ENCODE measurements at regions of chr12 and their contacts with region 1.

Region 1: GRCh38 chr12:108526482-108527165 is 11.5 kb downstream of the FICD start:
- DNase-seq: no peak
- ATAC-seq: no peak
- H3K4me3 Mint-ChIP-seq: no peak overlapping the region
- H3K27ac Mint-ChIP-seq: no peak overlapping the region
- H3K4me1 Mint-ChIP-seq: no peaks in the 10 kb centered on the region
- H3K27me3 Mint-ChIP-seq: no peaks in the 10 kb centered on the region
- CTCF ChIP-seq: no peak

Region 2: GRCh38 chr12:108542320-108542719 is 15.7 kb after region 1 on chr12:
- CTCF ChIA-PET with region 1: no interaction called
- POLR2A ChIA-PET with region 1: interaction called, 11 read pairs
- DNase-seq: no peak
- ATAC-seq: no peak
- H3K4me3 Mint-ChIP-seq: no peak overlapping the region
- H3K27ac Mint-ChIP-seq: no peak overlapping the region; the same call in 1 of the 2 replicates
- H3K4me1 Mint-ChIP-seq: no peaks in the 10 kb centered on the region
- H3K27me3 Mint-ChIP-seq: no peaks in the 10 kb centered on the region
- CTCF ChIP-seq: no peak

Region 3: GRCh38 chr12:109069307-109070231 is 542.9 kb after region 1 on chr12:
- CTCF ChIA-PET with region 1: no interaction called
- POLR2A ChIA-PET with region 1: no interaction called
- DNase-seq: peak; percentile 56
- ATAC-seq: peak; percentile 85
- H3K4me3 Mint-ChIP-seq: peak overlapping the region; percentile 52
- H3K27ac Mint-ChIP-seq: peak overlapping the region; percentile 92
- H3K4me1 Mint-ChIP-seq: peaks cover 15% of the 10 kb centered on the region
- H3K27me3 Mint-ChIP-seq: no peaks in the 10 kb centered on the region
- CTCF ChIP-seq: no peak

Measured in WTC11 (cell line).